ENCODE measurements at regions of chr7 and their contacts with region 1.

Region 1: GRCh38 chr7:77843194-77843593 is 44.6 kb downstream of the PHTF2 start:
- DNase-seq: no peak
- ATAC-seq: no peak
- H3K4me3 ChIP-seq: no peak overlapping the region
- H3K4me3 Mint-ChIP-seq: no peak overlapping the region
- H3K27ac ChIP-seq: no peak overlapping the region
- H3K27ac Mint-ChIP-seq: no peak overlapping the region
- H3K4me1 ChIP-seq: peaks cover 6 to 21% of the 10 kb centered on the region in 2 donors
- H3K4me1 Mint-ChIP-seq: peaks cover 53% of the 10 kb centered on the region
- H3K27me3 ChIP-seq: no peaks in the 10 kb centered on the region
- H3K27me3 Mint-ChIP-seq: no peaks in the 10 kb centered on the region
- CTCF ChIP-seq: no peak

Region 2: DNA sequence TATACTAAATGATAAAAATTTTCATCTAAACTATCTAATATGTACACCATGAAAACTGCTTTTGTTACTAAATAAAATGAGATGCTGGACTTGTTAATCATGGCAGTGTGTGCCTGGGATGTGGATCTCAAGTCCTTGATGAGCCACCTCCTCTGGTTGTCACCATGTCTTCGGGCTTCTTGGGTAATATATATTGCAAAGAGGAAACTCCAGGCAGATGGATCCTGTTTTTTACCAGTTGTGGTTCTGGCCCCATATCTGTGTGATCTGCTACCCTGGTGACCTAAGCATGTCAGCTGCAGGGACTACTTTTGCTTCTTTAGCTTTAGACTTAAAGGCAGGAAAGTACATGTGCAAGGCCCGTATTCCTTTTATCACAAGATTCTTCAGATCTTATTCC is 91.2 kb before region 1 on chr7:
- CTCF ChIA-PET with region 1: no interaction called
- POLR2A ChIA-PET with region 1: no interaction called
- intact Hi-C with region 1: no loop called
- DNase-seq: no peak
- ATAC-seq: no peak
- H3K4me3 ChIP-seq: no peak overlapping the region
- H3K4me3 Mint-ChIP-seq: no peak overlapping the region
- H3K27ac ChIP-seq: no peak overlapping the region
- H3K27ac Mint-ChIP-seq: peak overlapping the region; percentile 5
- H3K4me1 ChIP-seq: peaks cover 3 to 4% of the 10 kb centered on the region in 2 donors
- H3K4me1 Mint-ChIP-seq: peaks cover 17% of the 10 kb centered on the region
- H3K27me3 ChIP-seq: no peaks in the 10 kb centered on the region
- H3K27me3 Mint-ChIP-seq: no peaks in the 10 kb centered on the region
- CTCF ChIP-seq: no peak

Region 3: GRCh38 chr7:77855371-77856083 is 12.3 kb after region 1 on chr7:
- CTCF ChIA-PET with region 1: interaction called, 4 read pairs
- POLR2A ChIA-PET with region 1: no interaction called
- intact Hi-C with region 1: loop called (anchors 2 kb)
- DNase-seq: no peak
- ATAC-seq: no peak
- H3K4me3 ChIP-seq: no peak overlapping the region
- H3K4me3 Mint-ChIP-seq: no peak overlapping the region
- H3K27ac ChIP-seq: peak overlapping the region in 1 of 2 donors; percentile 25
- H3K27ac Mint-ChIP-seq: peak overlapping the region; percentile 23
- H3K4me1 ChIP-seq: peaks cover 12 to 28% of the 10 kb centered on the region in 2 donors
- H3K4me1 Mint-ChIP-seq: peaks cover 60% of the 10 kb centered on the region
- H3K27me3 ChIP-seq: no peaks in the 10 kb centered on the region
- H3K27me3 Mint-ChIP-seq: no peaks in the 10 kb centered on the region
- CTCF ChIP-seq: no peak

Region 4: DNA sequence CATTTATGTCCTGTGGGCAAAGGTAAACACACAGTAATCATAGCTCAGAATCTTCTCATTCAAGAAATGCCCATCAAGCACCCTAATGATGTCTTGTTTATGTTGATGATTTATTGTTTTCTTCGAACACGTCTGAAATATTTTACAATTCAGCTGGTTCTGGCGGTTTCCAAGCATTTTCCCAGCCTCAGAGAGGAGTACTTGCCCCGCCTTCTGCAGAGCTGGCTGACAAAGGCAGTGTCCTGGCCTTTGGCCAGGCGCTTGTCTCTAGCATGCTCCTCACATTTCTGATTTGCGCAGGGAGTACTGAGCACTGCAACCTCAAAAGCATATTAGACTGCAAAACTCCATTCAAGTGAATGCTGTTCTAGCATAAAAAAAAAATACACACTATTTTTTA is 1977.2 kb after region 1 on chr7:
- CTCF ChIA-PET with region 1: no interaction called
- POLR2A ChIA-PET with region 1: no interaction called
- intact Hi-C with region 1: no loop called
- DNase-seq: no peak
- ATAC-seq: no peak
- H3K4me3 ChIP-seq: no peak overlapping the region
- H3K4me3 Mint-ChIP-seq: no peak overlapping the region
- H3K27ac ChIP-seq: no peak overlapping the region
- H3K27ac Mint-ChIP-seq: no peak overlapping the region
- H3K4me1 ChIP-seq: no peaks in the 10 kb centered on the region
- H3K4me1 Mint-ChIP-seq: no peaks in the 10 kb centered on the region
- H3K27me3 ChIP-seq: no peaks in the 10 kb centered on the region
- H3K27me3 Mint-ChIP-seq: no peaks in the 10 kb centered on the region
- CTCF ChIP-seq: no peak